Activated CD4-positive, alpha-beta memory T cell treated with anti-CD3 and anti-CD28 coated beads for 36 hours (primary cell): ENCODE measurements at regions of chr4 and their contacts with region 1.

Region 1: GRCh38 chr4:100093091-100093866 is 97.0 kb downstream of the DDIT4L start:
- DNase-seq: peak; percentile 93
- H3K4me3 Mint-ChIP-seq: no peak overlapping the region
- H3K27ac Mint-ChIP-seq: peak overlapping the region; percentile 36
- H3K4me1 Mint-ChIP-seq: peaks cover 39% of the 10 kb centered on the region
- H3K27me3 Mint-ChIP-seq: no peaks in the 10 kb centered on the region

Region 2: DNA sequence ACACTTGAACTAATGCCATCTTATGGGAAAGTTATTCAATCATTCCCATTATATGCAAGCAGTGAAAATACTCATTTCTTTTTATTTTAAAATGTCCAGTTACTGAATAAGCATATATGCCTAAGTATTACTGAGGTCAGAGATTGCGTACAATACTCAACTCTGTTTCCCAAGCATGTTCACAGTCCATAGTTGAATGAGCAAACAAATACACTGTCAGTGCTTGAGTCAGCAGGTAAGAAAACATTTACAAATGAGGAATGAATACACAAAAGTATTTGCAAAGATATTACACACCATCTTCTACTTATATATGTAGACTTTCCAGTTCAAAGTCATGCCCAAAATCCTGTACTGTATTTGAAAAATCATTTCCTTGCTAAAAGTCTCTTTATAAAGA is 1509.0 kb before region 1 on chr4:
- CTCF ChIA-PET with region 1: no interaction called
- POLR2A ChIA-PET with region 1: no interaction called
- intact Hi-C with region 1: no loop called
- DNase-seq: no peak
- H3K4me3 Mint-ChIP-seq: no peak overlapping the region
- H3K27ac Mint-ChIP-seq: no peak overlapping the region
- H3K4me1 Mint-ChIP-seq: peaks cover 44% of the 10 kb centered on the region
- H3K27me3 Mint-ChIP-seq: no peaks in the 10 kb centered on the region

Region 3: GRCh38 chr4:99816545-99817308 is 276.6 kb before region 1 on chr4 and contains the start of gene DAPP1:
- CTCF ChIA-PET with region 1: no interaction called
- POLR2A ChIA-PET with region 1: no interaction called
- intact Hi-C with region 1: loop called (anchors 10 kb)
- DNase-seq: peak; percentile 89
- H3K4me3 Mint-ChIP-seq: peak within 1 kb of the TSS; percentile 81
- H3K27ac Mint-ChIP-seq: peak within 1 kb of the TSS; percentile 93
- H3K4me1 Mint-ChIP-seq: peaks cover 64% of the 10 kb centered on the region
- H3K27me3 Mint-ChIP-seq: no peaks in the 10 kb centered on the region
- total RNA-seq, gene DAPP1: 23.6 TPM

Region 4: DNA sequence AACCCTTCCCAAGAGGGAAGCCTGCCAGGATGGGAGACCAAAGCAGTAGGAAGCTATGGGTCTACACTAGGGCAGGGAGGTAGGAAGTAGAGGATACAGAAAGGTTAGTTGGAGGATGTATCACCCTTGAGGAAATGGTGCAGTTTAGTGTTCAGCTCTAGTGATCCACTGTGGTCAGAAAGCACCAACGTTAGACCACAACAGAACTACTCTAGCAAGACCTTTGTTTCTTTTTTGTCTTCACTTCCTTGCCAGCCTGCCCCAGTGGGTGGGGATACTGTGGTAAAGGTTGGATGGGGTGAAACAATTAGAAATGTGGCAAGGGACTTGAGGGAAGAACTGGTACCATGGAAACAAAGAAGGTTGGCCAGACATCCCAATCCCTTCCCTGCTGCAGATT is 13.7 kb after region 1 on chr4:
- CTCF ChIA-PET with region 1: interaction called, 14 read pairs
- POLR2A ChIA-PET with region 1: no interaction called
- intact Hi-C with region 1: no loop called
- DNase-seq: peak; percentile 19
- H3K4me3 Mint-ChIP-seq: no peak overlapping the region
- H3K27ac Mint-ChIP-seq: no peak overlapping the region
- H3K4me1 Mint-ChIP-seq: peaks cover 8% of the 10 kb centered on the region
- H3K27me3 Mint-ChIP-seq: no peaks in the 10 kb centered on the region

Region 5: GRCh38 chr4:100569196-100569595 is 475.9 kb after region 1 on chr4:
- CTCF ChIA-PET with region 1: interaction called, 3 read pairs
- POLR2A ChIA-PET with region 1: interaction called, 3 read pairs
- intact Hi-C with region 1: loop called (anchors 5 kb)
- DNase-seq: peak; percentile 12
- H3K4me3 Mint-ChIP-seq: no peak overlapping the region
- H3K27ac Mint-ChIP-seq: no peak overlapping the region
- H3K4me1 Mint-ChIP-seq: peaks cover 24% of the 10 kb centered on the region
- H3K27me3 Mint-ChIP-seq: no peaks in the 10 kb centered on the region

Region 6: DNA sequence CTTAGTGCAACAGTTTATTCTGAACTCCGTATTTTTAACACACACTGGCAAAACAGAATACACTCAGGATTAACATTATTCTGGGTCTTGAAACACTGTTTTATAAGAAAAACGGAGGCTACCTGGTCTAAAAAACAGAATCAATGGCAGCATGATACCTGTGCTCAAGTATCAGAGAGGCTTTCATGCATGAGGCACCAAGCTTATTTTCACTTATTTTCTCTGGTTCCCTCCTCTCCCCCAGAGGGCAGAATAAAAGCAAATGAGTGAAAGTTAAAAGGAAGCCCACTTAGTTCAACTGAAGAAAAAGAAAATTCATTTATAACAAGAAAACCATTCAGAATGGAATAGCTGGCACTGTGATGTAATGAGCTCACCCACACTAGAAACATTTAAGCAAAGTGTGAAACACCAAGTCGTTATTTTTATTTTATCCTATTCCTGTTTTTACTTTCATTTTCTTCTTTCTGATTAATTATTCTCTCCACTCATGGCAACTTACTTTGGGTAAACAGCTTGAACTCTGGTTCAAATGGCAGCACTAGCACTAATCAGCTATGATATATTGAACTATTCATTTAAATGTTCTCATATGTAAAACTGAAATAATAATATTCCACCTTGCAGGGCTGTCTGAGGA is 1042.2 kb after region 1 on chr4:
- CTCF ChIA-PET with region 1: no interaction called
- POLR2A ChIA-PET with region 1: no interaction called
- intact Hi-C with region 1: no loop called
- DNase-seq: no peak
- H3K4me3 Mint-ChIP-seq: peak overlapping the region; percentile 16
- H3K27ac Mint-ChIP-seq: no peak overlapping the region
- H3K4me1 Mint-ChIP-seq: peaks cover 26% of the 10 kb centered on the region
- H3K27me3 Mint-ChIP-seq: no peaks in the 10 kb centered on the region

Region 7: GRCh38 chr4:101155368-101155767 is 1062.1 kb after region 1 on chr4:
- CTCF ChIA-PET with region 1: interaction called, 4 read pairs
- POLR2A ChIA-PET with region 1: no interaction called
- intact Hi-C with region 1: loop called (anchors 2 kb)
- DNase-seq: no peak
- H3K4me3 Mint-ChIP-seq: no peak overlapping the region
- H3K27ac Mint-ChIP-seq: no peak overlapping the region
- H3K4me1 Mint-ChIP-seq: peaks cover 45% of the 10 kb centered on the region
- H3K27me3 Mint-ChIP-seq: no peaks in the 10 kb centered on the region

Region 8: DNA sequence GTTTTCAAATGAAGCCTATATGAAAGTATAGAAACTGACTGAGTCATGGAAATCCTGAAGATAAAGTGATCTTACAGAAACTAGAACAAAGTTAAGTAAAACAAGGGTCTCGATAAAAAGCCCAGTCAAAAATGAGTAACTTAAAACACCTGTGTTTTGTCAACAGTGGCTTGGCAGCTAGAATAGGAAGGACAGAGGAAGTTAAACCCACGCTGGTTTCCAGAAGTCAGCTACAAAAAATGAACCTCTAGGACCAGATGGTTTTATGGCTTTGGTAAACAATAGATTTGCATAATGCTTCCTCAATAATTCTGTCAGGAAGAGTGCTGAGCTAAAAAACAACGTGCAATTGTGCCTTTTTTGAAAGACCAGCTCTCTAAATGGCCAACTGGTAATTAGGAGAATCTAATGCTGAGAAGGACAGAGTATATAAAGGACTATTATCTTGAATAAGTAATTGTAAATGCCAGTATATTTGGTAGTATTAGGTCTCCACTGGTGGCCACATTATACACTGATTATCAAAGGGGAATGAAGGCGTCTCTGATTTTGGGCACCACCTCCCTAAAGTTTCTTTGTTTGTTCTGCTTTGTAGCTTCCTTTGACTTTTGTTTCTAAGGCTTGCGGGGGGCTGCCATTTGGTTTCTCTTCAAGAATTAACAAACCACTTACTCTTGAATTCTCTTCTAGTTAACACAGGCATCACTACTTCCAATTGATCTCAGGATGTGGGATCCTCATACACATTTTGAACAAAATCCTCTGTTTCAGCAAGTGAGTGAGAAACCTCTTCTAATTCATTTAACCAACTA is 1326.3 kb after region 1 on chr4:
- CTCF ChIA-PET with region 1: interaction called, 4 read pairs
- POLR2A ChIA-PET with region 1: no interaction called
- intact Hi-C with region 1: loop called (anchors 2 kb)
- DNase-seq: no peak
- H3K4me3 Mint-ChIP-seq: no peak overlapping the region
- H3K27ac Mint-ChIP-seq: no peak overlapping the region
- H3K4me1 Mint-ChIP-seq: peaks cover 35% of the 10 kb centered on the region
- H3K27me3 Mint-ChIP-seq: peaks cover 38% of the 10 kb centered on the region